MCF 10A (cell line): ENCODE measurements at regions of chr2 and their contacts with region 1.

Region 1: DNA sequence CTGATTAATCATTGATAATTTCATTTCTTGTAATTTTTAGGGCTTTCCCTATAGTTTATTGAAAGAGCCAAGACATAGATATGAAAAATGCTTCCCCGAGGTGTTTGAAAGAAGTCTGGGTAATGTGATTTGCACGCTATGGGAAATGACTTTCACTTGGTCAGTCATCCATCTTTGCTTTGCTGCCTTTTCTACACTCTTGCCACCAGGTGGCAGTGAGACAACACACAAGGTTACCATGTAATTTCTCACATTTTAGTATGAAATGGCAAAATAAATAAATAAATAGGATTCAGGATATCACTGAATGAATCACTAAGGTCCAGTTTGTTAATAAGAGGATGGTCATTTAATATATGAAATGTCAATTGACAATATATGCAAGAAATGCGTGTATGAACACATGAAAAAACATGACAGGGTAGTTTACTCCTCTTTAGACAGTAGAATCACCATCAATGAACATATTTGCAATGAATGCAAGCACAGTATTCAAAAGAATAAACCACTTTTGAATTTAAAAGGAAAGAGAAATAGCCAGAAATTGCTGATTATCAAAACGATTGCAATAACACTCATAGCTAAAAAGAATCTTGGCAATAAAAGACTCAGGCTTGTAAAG is 52.2 kb upstream of the KCNH7 start:
- DNase-seq: peak; percentile 80
- H3K4me3 Mint-ChIP-seq: no peak overlapping the region
- H3K27ac Mint-ChIP-seq: no peak overlapping the region
- H3K4me1 Mint-ChIP-seq: no peaks in the 10 kb centered on the region
- H3K27me3 Mint-ChIP-seq: peaks cover 35% of the 10 kb centered on the region
- CTCF ChIP-seq: peak; percentile 85

Region 2: DNA sequence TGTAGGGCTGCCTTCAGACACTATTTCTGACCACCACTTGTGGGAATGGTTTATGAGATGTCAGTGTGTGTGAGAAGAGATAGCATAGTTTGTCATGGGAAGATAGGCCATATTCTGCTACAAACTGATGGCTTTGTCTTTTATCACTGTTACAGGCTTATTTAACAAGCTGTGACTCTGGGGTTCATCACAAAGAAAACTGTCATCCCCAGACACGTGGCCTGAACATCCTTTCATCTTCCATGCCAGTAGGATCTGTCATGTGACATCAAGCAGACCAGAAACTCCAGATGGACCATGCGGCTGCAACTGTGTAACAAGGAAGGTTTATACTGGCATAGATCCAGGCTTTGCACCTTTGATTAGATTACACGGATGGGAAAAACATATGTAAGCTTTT is 76.3 kb after region 1 on chr2:
- CTCF ChIA-PET with region 1: interaction called, 3 read pairs
- POLR2A ChIA-PET with region 1: no interaction called
- intact Hi-C with region 1: loop called (anchors 10 kb)
- DNase-seq: no peak
- H3K4me3 Mint-ChIP-seq: no peak overlapping the region
- H3K27ac Mint-ChIP-seq: no peak overlapping the region
- H3K4me1 Mint-ChIP-seq: no peaks in the 10 kb centered on the region
- H3K27me3 Mint-ChIP-seq: peaks cover 14% of the 10 kb centered on the region
- CTCF ChIP-seq: no peak

Region 3: DNA sequence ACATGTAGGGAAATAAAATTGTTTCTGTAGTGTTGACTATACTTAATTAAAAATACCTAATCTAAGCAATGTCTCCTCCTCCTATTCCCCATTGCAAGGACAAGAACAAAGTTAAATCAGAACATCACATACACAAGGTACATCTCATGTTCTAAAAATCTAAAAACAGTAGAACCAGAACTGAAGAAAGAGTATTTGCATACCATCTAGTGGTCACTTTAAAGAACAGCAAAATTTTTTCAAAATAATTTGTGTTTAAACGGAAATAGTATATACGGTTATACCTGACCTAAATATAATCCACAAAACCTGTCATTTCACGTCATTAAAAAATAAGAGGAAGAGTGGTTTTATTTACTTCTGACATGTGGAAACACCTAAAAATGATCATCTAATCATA is 242.0 kb after region 1 on chr2:
- CTCF ChIA-PET with region 1: interaction called, 32 read pairs
- POLR2A ChIA-PET with region 1: interaction called, 4 read pairs
- intact Hi-C with region 1: loop called (anchors 1 kb)
- DNase-seq: peak; percentile 6
- H3K4me3 Mint-ChIP-seq: no peak overlapping the region
- H3K27ac Mint-ChIP-seq: no peak overlapping the region
- H3K4me1 Mint-ChIP-seq: no peaks in the 10 kb centered on the region
- H3K27me3 Mint-ChIP-seq: peaks cover 22% of the 10 kb centered on the region
- CTCF ChIP-seq: peak; percentile 60

Region 4: DNA sequence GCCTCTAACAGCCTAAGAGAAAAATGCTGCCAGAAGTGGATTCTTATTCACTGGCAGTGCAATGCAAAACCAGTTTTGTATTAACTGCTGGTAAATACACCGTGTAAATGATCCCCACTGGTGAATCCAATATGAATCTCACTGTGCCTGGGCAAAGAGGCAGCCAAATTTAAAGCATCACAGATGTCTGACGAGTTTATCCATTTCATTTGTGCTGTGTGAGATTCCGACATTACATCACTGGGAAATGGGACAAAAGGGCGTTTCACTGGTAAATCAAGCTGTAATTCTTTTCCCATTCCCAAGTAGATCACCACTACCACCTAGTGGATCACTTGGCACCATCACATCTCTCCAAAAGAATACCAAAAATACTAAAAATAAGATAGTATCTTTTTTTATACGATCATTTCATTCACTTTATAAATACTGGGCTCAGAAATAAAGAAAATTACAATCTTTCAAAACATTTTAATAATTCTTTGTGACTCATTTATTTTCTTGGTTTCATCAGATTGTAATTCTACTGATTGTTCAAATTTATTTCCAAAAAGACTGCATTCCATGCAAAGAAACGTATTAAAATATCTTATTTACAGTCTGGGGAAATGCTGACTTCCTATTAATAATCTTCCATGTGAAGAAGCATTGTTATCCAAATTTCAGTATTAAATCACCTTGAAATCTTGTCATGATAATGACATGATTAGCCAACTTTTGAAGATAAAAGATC is 1604.9 kb after region 1 on chr2:
- CTCF ChIA-PET with region 1: no interaction called
- POLR2A ChIA-PET with region 1: no interaction called
- intact Hi-C with region 1: loop called (anchors 10 kb)
- DNase-seq: peak; percentile 63
- H3K4me3 Mint-ChIP-seq: no peak overlapping the region
- H3K27ac Mint-ChIP-seq: no peak overlapping the region
- H3K4me1 Mint-ChIP-seq: no peaks in the 10 kb centered on the region
- H3K27me3 Mint-ChIP-seq: no peaks in the 10 kb centered on the region
- CTCF ChIP-seq: peak; percentile 68